ENCODE measurements at regions of chr19 and their contacts with region 1.

Region 1: GRCh38 chr19:40777937-40778705 is at the start of gene RAB4B:
- H3K4me3 ChIP-seq: peak within 1 kb of the TSS; percentile 68
- H3K27ac ChIP-seq: peak within 1 kb of the TSS; percentile 95
- H3K4me1 ChIP-seq: peaks cover 13% of the 10 kb centered on the region
- CTCF ChIP-seq: peak; percentile 55

Region 2: DNA sequence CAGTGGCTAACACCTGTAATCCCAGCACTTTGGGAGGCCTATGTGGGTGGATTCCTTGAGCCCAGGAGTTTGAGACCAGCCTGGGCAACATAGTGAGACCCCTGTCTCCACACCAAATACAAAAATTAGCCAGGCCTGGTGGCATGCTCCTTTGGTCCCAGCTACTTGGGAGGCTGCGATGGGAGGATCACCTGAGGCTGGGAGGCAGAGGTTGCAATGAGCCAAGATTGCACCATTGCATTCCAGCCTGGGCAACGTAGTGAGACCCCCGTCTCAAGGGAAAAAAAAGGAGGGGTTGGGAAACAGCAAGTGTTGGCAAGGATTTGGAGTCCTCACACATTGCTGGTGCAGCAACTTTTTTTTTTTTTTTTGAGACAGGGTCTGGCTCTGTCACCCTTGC is 292.1 kb before region 1 on chr19:
- CTCF ChIA-PET with region 1: no interaction called
- POLR2A ChIA-PET with region 1: no interaction called
- H3K4me3 ChIP-seq: no peak overlapping the region
- H3K27ac ChIP-seq: no peak overlapping the region
- H3K4me1 ChIP-seq: no peaks in the 10 kb centered on the region
- CTCF ChIP-seq: no peak

Region 3: GRCh38 chr19:40633207-40633606 is 144.9 kb before region 1 on chr19:
- CTCF ChIA-PET with region 1: interaction called, 17 read pairs
- POLR2A ChIA-PET with region 1: interaction called, 4 read pairs
- H3K4me3 ChIP-seq: no peak overlapping the region
- H3K27ac ChIP-seq: no peak overlapping the region
- H3K4me1 ChIP-seq: no peaks in the 10 kb centered on the region
- CTCF ChIP-seq: no peak

Region 4: GRCh38 chr19:40690693-40691420 is 87.3 kb before region 1 on chr19:
- CTCF ChIA-PET with region 1: interaction called, 4 read pairs
- POLR2A ChIA-PET with region 1: interaction called, 10 read pairs
- H3K4me3 ChIP-seq: peak overlapping the region; percentile 37
- H3K27ac ChIP-seq: peak overlapping the region; percentile 80; the same call in 1 of the 2 replicates
- H3K4me1 ChIP-seq: peaks cover 16% of the 10 kb centered on the region
- CTCF ChIP-seq: 0 out of 2 replicates have a peak, but pooled peaks have one; percentile 22

Region 5: GRCh38 chr19:40750059-40750873 is 27.9 kb before region 1 on chr19 and contains the start of gene ACTMAP:
- CTCF ChIA-PET with region 1: interaction called, 5 read pairs
- POLR2A ChIA-PET with region 1: interaction called, 180 read pairs
- H3K4me3 ChIP-seq: peak within 1 kb of the TSS; percentile 64
- H3K27ac ChIP-seq: peak within 1 kb of the TSS; percentile 93
- H3K4me1 ChIP-seq: peaks cover 32% of the 10 kb centered on the region
- CTCF ChIP-seq: no peak

Region 6: DNA sequence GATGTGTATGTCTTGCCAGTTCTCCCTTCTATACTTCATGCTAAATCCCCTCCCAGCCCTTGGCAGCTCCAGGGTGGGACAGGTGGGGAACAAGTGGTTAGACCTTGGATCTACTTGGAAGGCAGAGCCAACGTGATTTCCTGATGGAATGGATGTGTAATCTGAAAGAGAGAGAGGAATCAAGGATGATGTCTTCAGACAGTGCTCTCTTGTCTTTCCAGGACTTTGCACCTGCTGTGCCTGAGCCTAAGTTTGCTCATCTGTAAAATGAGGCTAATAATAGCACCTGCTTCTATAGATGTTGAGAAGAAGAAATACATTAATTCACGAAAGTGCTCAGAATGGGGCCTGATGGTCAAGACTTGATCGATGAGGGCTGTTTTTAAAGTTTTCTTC is 13.9 kb after region 1 on chr19:
- CTCF ChIA-PET with region 1: interaction called, 4 read pairs
- POLR2A ChIA-PET with region 1: interaction called, 39 read pairs
- H3K4me3 ChIP-seq: no peak overlapping the region
- H3K27ac ChIP-seq: no peak overlapping the region; the same call in 1 of the 2 replicates
- H3K4me1 ChIP-seq: 0 out of 2 replicates have a peak, but pooled peaks cover 3% of the 10 kb centered on the region
- CTCF ChIP-seq: no peak

Region 7: DNA sequence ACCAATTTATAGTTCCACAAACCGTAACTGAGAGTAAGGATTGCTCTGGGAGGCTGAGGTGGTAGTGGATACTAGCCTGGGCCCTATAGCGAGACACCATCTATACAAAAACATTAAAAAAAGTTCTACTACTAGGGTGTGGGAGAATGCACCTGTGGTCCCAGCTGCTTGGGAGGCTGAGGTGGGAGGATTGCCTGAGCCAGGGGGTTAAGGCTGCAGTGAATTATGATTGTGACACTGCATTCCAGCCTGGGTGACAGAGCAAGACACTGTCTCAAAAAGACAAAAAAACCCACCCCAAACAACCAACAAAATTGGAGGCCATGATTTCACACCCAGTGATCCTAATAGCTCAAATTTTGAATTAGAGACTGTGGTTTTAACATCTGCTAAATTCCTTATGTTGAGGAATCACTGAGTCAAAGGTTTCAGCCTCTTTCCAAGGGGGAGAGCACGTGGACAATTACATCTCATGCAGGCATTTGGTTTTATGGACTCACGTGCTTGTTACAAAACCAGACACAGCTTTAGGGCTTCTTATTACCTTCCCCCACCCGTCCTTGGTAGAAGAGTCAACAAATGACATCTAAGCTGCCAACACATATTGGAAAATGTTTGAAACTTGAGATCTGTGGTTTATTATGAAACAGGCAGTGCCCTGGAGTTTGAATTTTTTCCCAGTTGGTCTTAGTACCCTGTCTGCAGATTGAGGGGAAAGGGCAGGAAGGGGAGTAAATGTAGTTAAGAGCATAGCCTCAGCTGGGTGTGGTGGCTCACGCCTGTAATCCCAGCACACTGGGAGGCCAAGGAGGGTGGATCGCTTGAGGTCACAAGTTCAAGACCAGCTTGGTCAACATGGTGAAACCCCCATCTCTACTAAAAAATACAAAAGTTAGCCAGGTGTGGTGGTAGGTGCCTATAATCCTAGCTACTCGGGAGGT is 53.7 kb after region 1 on chr19:
- CTCF ChIA-PET with region 1: interaction called, 3 read pairs
- POLR2A ChIA-PET with region 1: interaction called, 14 read pairs
- H3K4me3 ChIP-seq: no peak overlapping the region
- H3K27ac ChIP-seq: peak overlapping the region; percentile 84
- H3K4me1 ChIP-seq: peaks cover 26% of the 10 kb centered on the region
- CTCF ChIP-seq: no peak